ENCODE measurements at regions of chr14 and their contacts with region 1.

Region 1: DNA sequence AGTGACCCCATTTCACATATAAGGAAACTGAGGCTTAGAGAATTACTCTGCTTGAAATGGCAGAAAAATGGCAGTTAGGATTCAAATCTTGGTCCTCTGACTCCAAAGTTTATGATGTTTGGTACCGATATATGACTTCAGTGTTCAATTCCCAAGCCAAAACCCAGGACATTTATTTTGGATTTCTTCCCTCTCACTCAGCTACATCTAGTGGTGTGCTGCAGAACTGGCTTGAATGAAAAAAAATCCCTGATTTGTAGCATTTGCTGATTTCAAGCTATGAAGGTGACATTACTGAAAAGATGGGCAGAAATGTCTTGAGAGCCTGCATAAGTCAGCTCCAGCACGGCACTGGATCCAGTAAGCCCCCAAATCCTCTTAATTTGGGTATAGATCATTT is 106.4 kb downstream of the EFCAB11 start:
- DNase-seq: no peak
- H3K4me3 ChIP-seq: no peak overlapping the region
- H3K27ac ChIP-seq: no peak overlapping the region
- H3K4me1 ChIP-seq: peaks cover 0 to 4% of the 10 kb centered on the region in 2 donors
- H3K27me3 ChIP-seq: no peaks in the 10 kb centered on the region
- CTCF ChIP-seq: peak; percentile 58 to 66 (median 61)

Region 2: DNA sequence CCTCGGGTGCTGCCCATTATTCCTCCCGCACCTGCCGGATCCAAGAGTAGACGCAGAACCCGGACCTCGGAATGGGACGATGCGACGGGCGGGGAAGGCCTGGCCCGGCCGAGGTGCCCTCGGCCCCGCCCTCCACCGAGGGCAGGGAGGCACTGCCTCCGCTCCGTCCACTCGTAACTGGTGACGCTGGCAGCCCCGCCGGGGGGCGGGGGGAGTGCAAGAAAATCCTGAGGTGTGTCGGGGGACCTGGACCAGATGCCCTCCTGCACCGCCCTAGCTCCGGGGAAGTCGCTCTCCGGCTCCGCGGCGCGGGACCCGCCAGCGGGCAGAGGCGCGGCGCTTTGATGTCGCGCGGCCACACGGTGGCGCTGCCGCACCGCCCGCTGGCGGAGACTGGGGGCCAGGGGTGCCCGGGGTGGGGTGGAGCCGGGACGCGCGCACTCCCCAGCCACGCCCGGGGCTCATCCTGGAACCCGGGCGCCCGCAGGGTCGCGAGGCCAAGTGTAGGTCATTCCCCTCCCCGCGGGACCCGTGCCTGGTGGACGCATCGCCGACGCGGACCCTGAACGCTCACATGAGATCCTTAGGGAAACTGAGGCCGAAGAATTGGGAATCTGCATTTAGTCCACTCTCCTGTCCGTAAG is 820.9 kb before region 1 on chr14:
- intact Hi-C with region 1: loop called (anchors 5 kb)
- DNase-seq: peak; percentile 39 to 73
- H3K4me3 ChIP-seq: peak overlapping the region; percentile 56 to 78
- H3K27ac ChIP-seq: no peak overlapping the region
- H3K4me1 ChIP-seq: peaks cover 0 to 3% of the 10 kb centered on the region in 2 donors
- H3K27me3 ChIP-seq: peaks cover 2% of the 10 kb centered on the region
- CTCF ChIP-seq: peak; percentile 64 to 96 (median 89)

Region 3: DNA sequence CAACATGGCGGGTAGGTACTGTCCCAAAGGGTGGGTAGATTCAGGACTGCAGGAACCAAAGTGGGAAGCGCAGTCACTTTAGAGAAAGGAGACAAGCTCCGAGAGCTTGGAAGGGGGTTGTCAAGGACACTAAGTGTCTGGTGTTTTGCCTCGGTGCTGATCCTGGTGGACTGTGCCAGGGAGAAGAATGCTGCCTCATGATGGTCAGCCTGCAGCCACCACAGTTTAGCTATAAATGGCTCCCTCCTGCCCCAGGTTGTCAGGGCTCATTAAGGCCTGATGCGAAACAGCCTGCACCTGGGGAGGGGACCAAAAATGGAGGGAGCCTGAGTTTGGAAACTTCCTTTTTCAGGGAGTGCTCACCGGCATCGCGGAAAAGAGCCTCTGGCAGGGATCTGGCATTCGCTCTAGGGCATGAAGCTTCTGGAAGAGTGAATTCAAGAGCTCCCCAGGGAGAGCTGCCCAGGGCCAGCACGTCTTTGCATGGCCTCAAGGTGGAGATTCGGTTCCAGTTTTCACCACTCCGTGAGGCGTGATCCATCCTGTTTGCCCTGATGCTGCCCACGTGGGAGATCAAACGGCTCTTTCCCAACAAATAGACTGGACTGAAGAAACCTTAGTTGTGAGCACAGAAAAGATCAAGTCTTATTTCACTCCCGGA is 595.1 kb before region 1 on chr14:
- intact Hi-C with region 1: loop called (anchors 10 kb)
- DNase-seq: peak in 1 of 2 donors; percentile 70
- H3K4me3 ChIP-seq: no peak overlapping the region
- H3K27ac ChIP-seq: peak overlapping the region in 1 of 2 donors; percentile 20
- H3K4me1 ChIP-seq: peaks cover 0 to 39% of the 10 kb centered on the region in 2 donors
- H3K27me3 ChIP-seq: no peaks in the 10 kb centered on the region
- CTCF ChIP-seq: peak in 2 of 3 experiments; percentile 31 to 46

Region 4: GRCh38 chr14:89618811-89619551 is 229.2 kb before region 1 on chr14:
- intact Hi-C with region 1: loop called (anchors 5 kb)
- DNase-seq: peak in 1 of 2 donors; percentile 83
- H3K4me3 ChIP-seq: peak overlapping the region; percentile 87 to 97
- H3K27ac ChIP-seq: peak overlapping the region; percentile 74 to 85
- H3K4me1 ChIP-seq: peaks cover 0 to 14% of the 10 kb centered on the region in 2 donors
- H3K27me3 ChIP-seq: no peaks in the 10 kb centered on the region
- CTCF ChIP-seq: no peak

Region 5: GRCh38 chr14:89701211-89702043 is 146.7 kb before region 1 on chr14:
- intact Hi-C with region 1: loop called (anchors 5 kb)
- DNase-seq: peak; percentile 49 to 92
- H3K4me3 ChIP-seq: peak overlapping the region; percentile 55 to 76
- H3K27ac ChIP-seq: peak overlapping the region; percentile 61 to 71
- H3K4me1 ChIP-seq: peaks cover 0 to 12% of the 10 kb centered on the region in 2 donors
- H3K27me3 ChIP-seq: no peaks in the 10 kb centered on the region
- CTCF ChIP-seq: no peak

Measured in ascending aorta (tissue), 2 donors.